HepG2 (cell line): ENCODE measurements at regions of chr14 and their contacts with region 1.

Region 1: GRCh38 chr14:76956316-76957090 is 72.0 kb downstream of the IRF2BPL start:
- DNase-seq: peak; percentile 89
- ATAC-seq: peak; percentile 74
- H3K4me3 ChIP-seq: peak overlapping the region; percentile 53 to 77 (median 56)
- H3K27ac ChIP-seq: peak overlapping the region; percentile 78
- H3K4me1 ChIP-seq: peaks cover 89% of the 10 kb centered on the region
- H3K27me3 ChIP-seq: no peaks in the 10 kb centered on the region
- CTCF ChIP-seq: peak; percentile 37
- EP300 ChIP-seq: peak in 1 of 2 experiments; percentile 47; a peak in 1 of 4 replicates
- POLR2A ChIP-seq: peak; percentile 40 to 51; a peak in 3 of 4 replicates
- RAD21 ChIP-seq: 0 out of 2 replicates have a peak, but pooled peaks have one; percentile 44

Region 2: GRCh38 chr14:77028384-77029231 is 72.1 kb after region 1 on chr14 and contains the start of gene IRF2BPL:
- CTCF ChIA-PET with region 1: no interaction called
- POLR2A ChIA-PET with region 1: interaction called, 16 read pairs
- in situ Hi-C with region 1: no loop called
- intact Hi-C with region 1: no loop called
- DNase-seq: peak; percentile 94
- ATAC-seq: peak; percentile 53
- H3K4me3 ChIP-seq: peak within 1 kb of the TSS; percentile 82 to 85 (median 85)
- H3K27ac ChIP-seq: peak within 1 kb of the TSS; percentile 94
- H3K4me1 ChIP-seq: peaks cover 79% of the 10 kb centered on the region
- H3K27me3 ChIP-seq: no peaks in the 10 kb centered on the region
- CTCF ChIP-seq: no peak; the same call in 1 of the 2 replicates
- EP300 ChIP-seq: peak in 1 of 2 experiments; percentile 79; a peak in 3 of 4 replicates
- POLR2A ChIP-seq: peak; percentile 87 to 90
- RAD21 ChIP-seq: peak; percentile 47
- total RNA-seq, gene IRF2BPL: 6.2 and 8.4 TPM in 2 replicates

Region 3: GRCh38 chr14:77186911-77187648 is 230.6 kb after region 1 on chr14:
- CTCF ChIA-PET with region 1: no interaction called
- POLR2A ChIA-PET with region 1: no interaction called
- in situ Hi-C with region 1: no loop called
- intact Hi-C with region 1: no loop called
- DNase-seq: no peak
- ATAC-seq: peak; percentile 58
- H3K4me3 ChIP-seq: peak overlapping the region; percentile 17 to 66 (median 39); a peak in 5 of 6 replicates
- H3K27ac ChIP-seq: no peak overlapping the region
- H3K4me1 ChIP-seq: peaks cover 52% of the 10 kb centered on the region
- H3K27me3 ChIP-seq: peaks cover 3 to 14% of the 10 kb centered on the region in 2 experiments; a peak in 3 of 5 replicates
- CTCF ChIP-seq: no peak
- EP300 ChIP-seq: no peak
- POLR2A ChIP-seq: no peak
- RAD21 ChIP-seq: no peak